Endothelial cell of umbilical vein (primary cell): ENCODE measurements at regions of chr15 and their contacts with region 1.

Region 1: DNA sequence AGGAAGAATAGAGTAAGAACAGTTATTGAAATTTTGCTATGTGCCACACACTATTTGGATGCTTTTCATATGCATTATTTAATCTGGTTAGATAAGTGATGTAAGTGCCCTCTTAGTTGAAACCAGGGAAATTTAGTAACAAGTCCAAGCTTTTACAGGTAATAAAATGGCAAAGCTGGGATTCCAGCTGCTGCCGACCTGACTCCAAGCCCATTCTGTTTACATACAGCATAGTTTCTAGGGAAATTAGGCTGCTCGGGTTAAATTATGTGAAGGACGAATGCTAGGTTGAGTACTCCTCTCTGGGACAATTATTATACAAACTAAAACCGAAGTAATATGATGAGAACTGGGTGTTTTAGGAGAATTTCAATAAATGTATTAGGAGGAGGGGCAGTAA is 38.7 kb upstream of the FAH start:
- DNase-seq: no peak
- H3K4me3 ChIP-seq: no peak overlapping the region
- H3K27ac ChIP-seq: no peak overlapping the region
- H3K4me1 ChIP-seq: no peaks in the 10 kb centered on the region
- H3K27me3 ChIP-seq: no peaks in the 10 kb centered on the region
- CTCF ChIP-seq: no peak
- POLR2A ChIP-seq: no peak

Region 2: DNA sequence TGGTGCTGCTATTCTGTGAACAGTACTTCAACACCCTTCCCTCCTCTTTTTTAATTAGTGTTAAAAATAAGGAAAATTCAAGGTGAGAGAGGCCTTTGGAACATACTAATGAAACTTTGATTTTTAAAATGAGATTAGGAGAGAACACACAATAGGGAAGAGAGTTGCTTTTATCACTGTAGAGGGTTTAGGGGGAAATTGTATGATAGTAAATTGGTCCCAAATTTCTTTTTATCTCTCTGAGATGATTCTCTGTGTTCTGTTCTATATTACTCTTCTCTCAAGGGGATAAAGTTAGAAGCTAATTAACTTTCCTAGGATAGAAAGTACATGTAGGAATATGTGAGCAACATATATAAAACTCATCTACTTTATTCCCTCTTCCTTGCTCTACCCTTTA is 13.9 kb before region 1 on chr15:
- CTCF ChIA-PET with region 1: no interaction called
- POLR2A ChIA-PET with region 1: no interaction called
- dilution Hi-C with region 1: no loop called
- intact Hi-C with region 1: loop called (anchors 2 kb)
- DNase-seq: no peak
- H3K4me3 ChIP-seq: no peak overlapping the region
- H3K27ac ChIP-seq: no peak overlapping the region
- H3K4me1 ChIP-seq: peaks cover 8% of the 10 kb centered on the region
- H3K27me3 ChIP-seq: no peaks in the 10 kb centered on the region
- CTCF ChIP-seq: no peak
- POLR2A ChIP-seq: no peak